Calu3 (cell line): ENCODE measurements at regions of chr3 and their contacts with region 1.

Region 1: GRCh38 chr3:21170964-21171363 is 580.0 kb downstream of the ZNF385D start:
- DNase-seq: peak; percentile 27
- H3K4me3 Mint-ChIP-seq: no peak overlapping the region
- H3K27ac Mint-ChIP-seq: no peak overlapping the region
- H3K4me1 Mint-ChIP-seq: no peaks in the 10 kb centered on the region
- H3K27me3 Mint-ChIP-seq: no peaks in the 10 kb centered on the region
- CTCF ChIP-seq: peak; percentile 27

Region 2: DNA sequence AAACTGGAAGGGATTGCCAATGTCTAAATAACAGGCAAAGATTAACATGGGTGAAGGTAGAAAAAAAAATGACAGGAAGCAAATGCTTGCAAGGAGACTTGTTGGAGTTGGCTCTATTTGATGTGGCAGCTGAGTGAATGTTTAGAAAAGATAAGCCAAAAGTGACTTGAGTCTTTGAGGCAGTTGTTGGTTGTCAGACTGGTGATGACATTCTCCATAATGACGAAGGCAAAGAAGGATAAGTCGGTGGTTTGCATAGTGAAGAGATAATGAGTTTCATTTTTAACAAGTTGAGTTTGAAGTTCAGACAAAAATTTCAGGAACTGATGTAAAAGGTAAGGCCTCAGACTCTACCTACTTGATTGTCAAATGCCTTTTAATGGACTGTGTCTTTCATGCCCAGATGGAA is 280.8 kb before region 1 on chr3:
- CTCF ChIA-PET with region 1: no interaction called
- intact Hi-C with region 1: no loop called
- DNase-seq: no peak
- H3K4me3 Mint-ChIP-seq: no peak overlapping the region
- H3K27ac Mint-ChIP-seq: no peak overlapping the region
- H3K4me1 Mint-ChIP-seq: no peaks in the 10 kb centered on the region
- H3K27me3 Mint-ChIP-seq: no peaks in the 10 kb centered on the region
- CTCF ChIP-seq: no peak

Region 3: GRCh38 chr3:21100656-21101359 is 70.2 kb before region 1 on chr3:
- CTCF ChIA-PET with region 1: no interaction called
- intact Hi-C with region 1: no loop called
- DNase-seq: no peak
- H3K4me3 Mint-ChIP-seq: no peak overlapping the region
- H3K27ac Mint-ChIP-seq: no peak overlapping the region
- H3K4me1 Mint-ChIP-seq: no peaks in the 10 kb centered on the region
- H3K27me3 Mint-ChIP-seq: no peaks in the 10 kb centered on the region
- CTCF ChIP-seq: no peak

Region 4: GRCh38 chr3:21477541-21478288 is 306.8 kb after region 1 on chr3:
- CTCF ChIA-PET with region 1: no interaction called
- intact Hi-C with region 1: loop called (anchors 10 kb)
- DNase-seq: no peak
- H3K4me3 Mint-ChIP-seq: no peak overlapping the region
- H3K27ac Mint-ChIP-seq: no peak overlapping the region
- H3K4me1 Mint-ChIP-seq: peaks cover 6% of the 10 kb centered on the region
- H3K27me3 Mint-ChIP-seq: no peaks in the 10 kb centered on the region
- CTCF ChIP-seq: no peak

Region 5: DNA sequence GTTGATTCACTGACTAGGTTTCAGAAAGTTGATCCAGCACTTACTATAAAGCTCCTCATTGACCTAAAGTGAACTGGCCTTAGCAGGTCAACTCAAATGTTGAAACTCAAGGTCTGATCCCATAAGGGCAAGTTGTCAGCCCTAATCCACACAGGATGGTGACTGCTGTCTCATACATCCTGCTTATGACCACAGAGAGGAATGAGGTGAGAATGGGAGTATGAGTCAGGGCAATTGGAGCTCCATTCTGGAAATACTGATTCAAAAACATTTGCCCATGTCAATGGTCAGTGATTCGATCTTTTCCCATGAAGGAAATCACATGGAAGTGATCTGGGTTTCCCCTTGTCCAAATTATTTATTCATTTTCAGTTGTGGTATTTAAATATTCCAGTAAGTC is 501.3 kb after region 1 on chr3:
- CTCF ChIA-PET with region 1: no interaction called
- intact Hi-C with region 1: no loop called
- DNase-seq: peak; percentile 3
- H3K4me3 Mint-ChIP-seq: no peak overlapping the region
- H3K27ac Mint-ChIP-seq: no peak overlapping the region
- H3K4me1 Mint-ChIP-seq: peaks cover 8% of the 10 kb centered on the region
- H3K27me3 Mint-ChIP-seq: no peaks in the 10 kb centered on the region
- CTCF ChIP-seq: no peak